Posterior vena cava (tissue), 2 donors: ENCODE measurements at regions of chr1 and their contacts with region 1.

Region 1: DNA sequence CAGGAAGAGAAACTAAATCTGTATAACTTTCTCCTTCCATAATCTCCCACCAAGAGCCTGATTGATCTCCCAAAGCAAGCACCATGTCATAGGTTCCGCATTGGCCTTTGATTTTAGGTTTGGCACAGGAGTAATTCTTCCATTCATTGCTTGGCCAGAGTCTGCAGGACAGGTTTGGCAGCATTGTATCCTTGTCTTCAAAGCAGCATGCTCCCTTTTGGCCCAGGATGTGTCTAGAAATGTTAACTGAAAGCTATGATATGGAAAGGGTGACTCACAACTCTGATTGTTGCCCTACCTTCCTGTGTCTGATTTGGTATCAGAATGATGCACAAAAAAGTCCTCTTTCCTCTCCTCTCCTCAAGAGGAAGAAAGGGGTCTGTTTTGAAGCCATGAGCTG is 824.3 kb upstream of the PRMT6 start:
- DNase-seq: no peak

Region 2: DNA sequence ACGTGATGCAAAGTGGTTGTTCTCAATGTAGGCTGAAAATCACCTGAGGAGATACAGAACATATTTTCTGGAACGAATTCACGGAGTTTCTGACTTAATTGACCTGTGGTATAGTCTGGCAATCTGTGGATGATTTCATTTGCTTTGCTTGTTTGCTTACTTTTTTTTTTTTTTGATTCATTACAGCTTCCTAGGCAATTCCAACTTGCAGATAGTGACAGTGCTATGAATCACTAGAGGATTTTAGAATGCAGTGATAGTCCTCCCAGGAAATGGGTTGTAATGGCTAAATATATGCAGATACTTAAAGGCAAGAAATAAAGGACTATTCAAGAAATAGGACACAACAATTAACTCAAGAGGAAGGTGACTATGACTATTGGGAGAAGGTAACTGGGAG is 553.8 kb before region 1 on chr1:
- intact Hi-C with region 1: no loop called
- DNase-seq: no peak

Region 3: GRCh38 chr1:106254746-106255145 is 22.6 kb after region 1 on chr1:
- intact Hi-C with region 1: loop called in 1 of 2 experiments (anchors 1 kb)
- DNase-seq: no peak